ENCODE measurements at regions of chr2 and their contacts with region 1.

Region 1: GRCh38 chr2:170098626-170099312 is 79.2 kb upstream of the MYO3B start:
- DNase-seq: no peak
- H3K4me3 ChIP-seq: no peak overlapping the region
- H3K27ac ChIP-seq: no peak overlapping the region
- H3K4me1 ChIP-seq: no peaks in the 10 kb centered on the region
- H3K27me3 ChIP-seq: no peaks in the 10 kb centered on the region
- CTCF ChIP-seq: no peak
- POLR2A ChIP-seq: no peak

Region 2: GRCh38 chr2:170227507-170227947 is 128.8 kb after region 1 on chr2:
- intact Hi-C with region 1: loop called (anchors 5 kb)
- DNase-seq: no peak
- H3K4me3 ChIP-seq: no peak overlapping the region
- H3K27ac ChIP-seq: no peak overlapping the region
- H3K4me1 ChIP-seq: peaks cover 0 to 5% of the 10 kb centered on the region in 2 donors
- H3K27me3 ChIP-seq: no peaks in the 10 kb centered on the region
- CTCF ChIP-seq: no peak
- POLR2A ChIP-seq: no peak

Measured in thyroid gland (tissue), 4 donors.